ENCODE measurements at regions of chr4 and their contacts with region 1.

Region 1: DNA sequence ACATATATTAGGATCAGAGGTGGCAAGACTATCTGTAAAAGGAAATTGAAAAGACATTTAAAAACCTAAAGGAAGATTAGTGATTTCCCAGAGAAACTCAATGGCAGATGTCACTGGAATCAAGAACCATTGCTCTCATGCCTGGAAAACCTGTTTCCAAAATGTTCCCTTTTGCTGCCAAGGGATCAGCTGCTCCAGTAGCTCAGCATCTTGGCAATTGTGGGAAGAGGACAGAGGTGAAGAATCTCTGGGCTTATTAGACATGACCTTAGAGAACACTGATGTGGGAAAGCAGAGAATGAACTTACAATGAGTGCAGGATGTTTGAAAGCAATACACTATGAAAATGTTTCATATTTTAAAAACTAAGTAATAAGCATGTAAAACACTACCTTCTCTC is 98.3 kb downstream of the SHROOM3 start:
- DNase-seq: no peak
- H3K4me3 ChIP-seq: no peak overlapping the region
- H3K27ac ChIP-seq: no peak overlapping the region
- H3K4me1 ChIP-seq: no peaks in the 10 kb centered on the region
- H3K27me3 ChIP-seq: no peaks in the 10 kb centered on the region
- CTCF ChIP-seq: no peak

Region 2: GRCh38 chr4:76354517-76355473 is 178.5 kb before region 1 on chr4:
- intact Hi-C with region 1: no loop called
- DNase-seq: no peak
- H3K4me3 ChIP-seq: no peak overlapping the region
- H3K27ac ChIP-seq: no peak overlapping the region
- H3K4me1 ChIP-seq: no peaks in the 10 kb centered on the region
- H3K27me3 ChIP-seq: no peaks in the 10 kb centered on the region
- CTCF ChIP-seq: no peak

Region 3: GRCh38 chr4:76570141-76570973 is 37.0 kb after region 1 on chr4:
- intact Hi-C with region 1: loop called (anchors 5 kb)
- DNase-seq: no peak
- H3K4me3 ChIP-seq: no peak overlapping the region
- H3K27ac ChIP-seq: no peak overlapping the region
- H3K4me1 ChIP-seq: no peaks in the 10 kb centered on the region
- H3K27me3 ChIP-seq: no peaks in the 10 kb centered on the region
- CTCF ChIP-seq: no peak

Region 4: GRCh38 chr4:77232653-77233052 is 699.3 kb after region 1 on chr4:
- intact Hi-C with region 1: no loop called
- DNase-seq: no peak
- H3K4me3 ChIP-seq: no peak overlapping the region
- H3K27ac ChIP-seq: no peak overlapping the region
- H3K4me1 ChIP-seq: no peaks in the 10 kb centered on the region
- H3K27me3 ChIP-seq: no peaks in the 10 kb centered on the region
- CTCF ChIP-seq: no peak